Adrenal gland (tissue), 19 donors: ENCODE measurements at regions of chr4 and their contacts with region 1.

Region 1: GRCh38 chr4:1746265-1746691 is 25.0 kb downstream of the TACC3 start:
- DNase-seq: peak; percentile 61 to 79 (median 66)
- H3K4me3 ChIP-seq: no peak overlapping the region
- H3K27ac ChIP-seq: no peak overlapping the region
- H3K4me1 ChIP-seq: peaks cover 0 to 3% of the 10 kb centered on the region in 2 donors
- H3K27me3 ChIP-seq: peaks cover 4% of the 10 kb centered on the region
- CTCF ChIP-seq: peak; percentile 64 to 84 (median 70)
- POLR2A ChIP-seq: no peak

Region 2: GRCh38 chr4:1246046-1246881 is 500.0 kb before region 1 on chr4:
- intact Hi-C with region 1: no loop called
- DNase-seq: peak in 6 of 7 donors; percentile 12 to 54 (median 20)
- H3K4me3 ChIP-seq: peak overlapping the region in 1 of 4 donors; percentile 83
- H3K27ac ChIP-seq: peak overlapping the region in 2 of 5 donors; percentile 97 to 99
- H3K4me1 ChIP-seq: peaks cover 26 to 68% of the 10 kb centered on the region in 2 donors
- H3K27me3 ChIP-seq: no peaks in the 10 kb centered on the region
- CTCF ChIP-seq: no peak
- POLR2A ChIP-seq: no peak

Region 3: GRCh38 chr4:1654216-1654955 is 91.9 kb before region 1 on chr4:
- intact Hi-C with region 1: no loop called
- DNase-seq: no peak
- H3K4me3 ChIP-seq: no peak overlapping the region
- H3K27ac ChIP-seq: no peak overlapping the region
- H3K4me1 ChIP-seq: no peaks in the 10 kb centered on the region
- H3K27me3 ChIP-seq: no peaks in the 10 kb centered on the region
- CTCF ChIP-seq: no peak
- POLR2A ChIP-seq: no peak

Region 4: DNA sequence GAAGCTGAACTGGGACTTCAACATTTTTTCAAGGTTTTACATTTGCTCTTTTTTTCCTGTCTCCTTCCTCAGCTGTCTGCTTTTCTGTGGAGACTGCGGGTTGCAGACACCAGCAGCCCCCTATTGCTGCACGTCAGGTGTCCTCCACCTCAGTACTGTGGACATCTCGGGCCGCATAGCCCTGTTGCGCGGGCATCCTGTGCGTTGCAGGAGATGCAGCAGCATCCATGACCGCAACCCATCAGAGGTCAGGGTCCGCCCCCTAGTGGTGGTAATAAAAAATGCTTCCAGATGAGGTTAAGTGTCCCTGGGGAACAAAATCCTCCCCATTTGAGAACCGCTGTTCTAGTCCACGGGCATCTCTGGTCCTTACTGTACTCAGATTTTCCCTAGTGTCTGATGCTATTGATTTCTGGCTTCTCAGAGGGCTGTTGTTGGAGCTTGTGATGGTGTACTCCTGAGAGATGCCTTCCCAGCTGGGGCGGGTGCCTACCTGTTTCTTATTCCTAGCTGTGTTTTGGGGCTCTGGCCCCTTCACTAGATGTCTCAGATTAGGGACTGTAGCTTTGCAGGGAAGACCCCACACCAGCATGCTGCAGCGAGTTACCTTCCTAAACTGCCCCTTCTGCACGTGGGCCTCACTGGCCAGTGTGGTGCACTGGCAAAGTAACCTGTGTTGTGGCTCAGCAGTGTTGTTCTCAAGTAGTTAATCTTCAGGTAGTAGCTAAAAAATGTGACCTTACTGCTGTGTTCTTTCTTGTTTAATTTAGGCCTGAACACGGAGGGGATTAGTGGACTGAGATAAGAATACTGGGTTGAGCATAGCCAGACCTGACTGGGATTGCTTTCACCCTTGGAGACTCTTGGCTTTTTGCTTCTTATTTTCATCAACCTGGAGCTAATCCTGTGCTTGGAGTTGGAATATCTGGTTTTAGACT is 153.1 kb after region 1 on chr4:
- intact Hi-C with region 1: loop called (anchors 5 kb)
- DNase-seq: peak; percentile 66 to 89 (median 78)
- H3K4me3 ChIP-seq: no peak overlapping the region
- H3K27ac ChIP-seq: no peak overlapping the region
- H3K4me1 ChIP-seq: no peaks in the 10 kb centered on the region
- H3K27me3 ChIP-seq: no peaks in the 10 kb centered on the region
- CTCF ChIP-seq: peak; percentile 87 to 95 (median 88)
- POLR2A ChIP-seq: no peak